Heart right ventricle (tissue), 16 donors: ENCODE measurements at regions of chr10 and their contacts with region 1.

Region 1: DNA sequence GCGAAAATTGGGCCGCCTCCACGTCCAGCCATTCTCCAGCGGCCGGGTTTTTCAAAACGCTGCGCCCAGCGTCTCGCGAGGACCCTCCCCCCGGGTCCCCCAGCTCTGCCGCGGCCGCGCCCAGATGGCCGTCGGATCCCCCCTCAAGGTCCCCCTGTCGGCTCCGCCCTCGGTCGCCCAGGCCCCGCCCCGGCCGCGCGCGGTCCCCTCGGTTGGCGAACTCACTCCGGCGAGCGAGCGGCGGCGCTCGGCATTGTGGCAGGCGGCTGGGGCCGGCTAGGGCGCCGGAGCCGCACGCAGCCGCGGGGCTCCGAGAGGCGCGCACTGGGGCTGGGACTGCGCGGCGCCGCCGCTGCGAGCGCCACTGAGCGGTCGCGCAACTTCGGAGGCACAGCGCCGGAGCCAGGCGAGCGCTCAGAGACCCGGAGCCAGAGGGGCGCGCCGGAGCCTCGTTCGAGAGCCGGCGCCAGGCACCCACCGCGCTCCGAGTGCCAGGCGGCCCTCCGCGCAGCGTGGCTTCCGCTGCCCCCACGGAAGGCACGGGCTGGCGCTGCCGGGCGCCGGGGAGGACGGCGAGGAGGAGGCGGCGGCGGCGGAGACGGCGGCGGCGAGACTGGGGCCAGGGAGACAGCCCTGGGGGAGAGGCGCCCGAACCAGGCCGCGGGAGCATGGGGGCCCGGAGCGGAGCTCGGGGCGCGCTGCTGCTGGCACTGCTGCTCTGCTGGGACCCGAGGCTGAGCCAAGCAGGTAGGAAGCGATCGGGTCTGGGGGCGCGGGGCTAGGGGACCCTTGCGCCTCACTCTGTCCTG is at the start of gene UNC5B:
- DNase-seq: peak; percentile 92
- ATAC-seq: peak; percentile 76 to 93 (median 87)
- H3K4me3 ChIP-seq: peak within 1 kb of the TSS; percentile 62 to 98 (median 82)
- H3K27ac ChIP-seq: peak within 1 kb of the TSS; percentile 61 to 96 (median 93)
- H3K4me1 ChIP-seq: peaks cover 15 to 68% (median 52%) of the 10 kb centered on the region in 9 donors
- H3K27me3 ChIP-seq: peaks cover 0 to 85% (median 10%) of the 10 kb centered on the region in 7 donors
- CTCF ChIP-seq: peak in 6 of 9 donors; percentile 31 to 61 (median 48)
- total RNA-seq, gene UNC5B: 9.0 to 20.6 (median 12.5) TPM

Region 2: DNA sequence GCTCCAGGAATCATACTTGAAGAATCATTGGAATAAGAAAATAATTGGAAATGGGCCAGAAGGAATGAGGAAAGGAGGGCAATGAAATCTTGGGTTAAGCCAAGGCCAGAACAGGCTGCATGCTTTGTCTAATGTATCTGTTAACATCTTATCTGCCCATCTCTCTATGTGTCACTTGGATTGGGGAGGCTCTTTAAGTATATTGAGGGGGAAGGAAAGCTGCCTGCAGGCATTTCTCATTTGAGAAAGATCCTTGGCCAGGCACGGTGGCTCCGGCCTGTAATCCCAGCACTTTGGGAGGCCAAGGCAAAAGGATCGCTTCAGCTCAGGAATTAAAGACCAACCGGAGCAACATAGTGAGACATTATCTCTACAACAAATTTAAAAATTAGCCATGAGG is 338.5 kb before region 1 on chr10:
- intact Hi-C with region 1: no loop called
- DNase-seq: no peak
- ATAC-seq: no peak
- H3K4me3 ChIP-seq: no peak overlapping the region
- H3K27ac ChIP-seq: no peak overlapping the region
- H3K4me1 ChIP-seq: peaks cover 0 to 7% (median 0%) of the 10 kb centered on the region in 9 donors
- H3K27me3 ChIP-seq: no peaks in the 10 kb centered on the region
- CTCF ChIP-seq: no peak

Region 3: GRCh38 chr10:70903262-70903921 is 309.1 kb before region 1 on chr10:
- intact Hi-C with region 1: loop called in 2 of 10 experiments (anchors 5 kb)
- DNase-seq: peak; percentile 59 to 77
- ATAC-seq: peak; percentile 31 to 78 (median 74)
- H3K4me3 ChIP-seq: peak overlapping the region in 1 of 10 donors; percentile 10
- H3K27ac ChIP-seq: no peak overlapping the region
- H3K4me1 ChIP-seq: peaks cover 0 to 24% (median 11%) of the 10 kb centered on the region in 9 donors
- H3K27me3 ChIP-seq: peaks cover 0 to 5% (median 0%) of the 10 kb centered on the region in 7 donors
- CTCF ChIP-seq: peak; percentile 86 to 96 (median 93)

Region 4: GRCh38 chr10:71015674-71016073 is 196.8 kb before region 1 on chr10:
- intact Hi-C with region 1: loop called in 3 of 10 experiments (anchors 5 to 10 kb)
- DNase-seq: no peak
- ATAC-seq: peak in 1 of 8 donors; percentile 36
- H3K4me3 ChIP-seq: no peak overlapping the region
- H3K27ac ChIP-seq: no peak overlapping the region
- H3K4me1 ChIP-seq: peaks cover 0 to 12% (median 7%) of the 10 kb centered on the region in 9 donors
- H3K27me3 ChIP-seq: no peaks in the 10 kb centered on the region
- CTCF ChIP-seq: no peak

Region 5: DNA sequence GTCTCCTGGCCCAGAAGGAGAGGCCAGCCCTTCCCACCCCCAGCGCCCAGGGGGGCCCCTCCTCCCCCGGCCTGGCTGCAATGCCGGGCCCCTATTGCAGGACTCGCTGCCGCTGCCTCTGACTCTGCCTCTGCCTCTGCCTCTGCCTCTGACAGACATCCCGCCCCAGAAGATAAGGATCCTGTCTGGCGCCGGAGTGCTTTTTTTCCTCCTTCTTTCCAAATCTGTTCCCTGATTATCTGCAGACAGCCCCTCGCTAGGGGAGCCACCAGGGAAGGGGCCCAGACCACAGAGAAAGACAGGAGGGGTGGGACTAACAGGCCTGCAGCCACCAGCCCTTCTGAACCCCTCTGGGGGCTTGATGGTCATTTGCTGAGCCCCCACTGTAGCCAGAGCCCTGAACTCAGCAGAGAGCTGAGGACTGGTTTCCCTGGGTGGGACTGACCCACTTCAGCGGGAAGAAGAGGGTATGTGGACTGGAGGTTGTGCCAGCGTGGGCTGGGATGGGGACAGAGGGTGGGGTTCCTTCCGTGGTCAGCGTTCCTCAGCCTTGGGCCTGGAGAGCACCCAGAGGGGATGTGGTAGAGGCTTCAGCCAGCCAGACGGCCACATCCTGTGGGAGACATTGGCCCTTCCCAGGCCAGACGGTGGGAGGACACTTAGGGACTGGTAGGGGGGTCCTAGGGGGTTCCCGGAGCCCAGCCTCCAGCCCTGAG is 22.6 kb after region 1 on chr10:
- intact Hi-C with region 1: loop called in 2 of 10 experiments (anchors 1 to 2 kb)
- DNase-seq: peak; percentile 70 to 74
- ATAC-seq: peak; percentile 53 to 84 (median 74)
- H3K4me3 ChIP-seq: peak overlapping the region in 4 of 10 donors; percentile 12 to 30 (median 20)
- H3K27ac ChIP-seq: peak overlapping the region; percentile 13 to 85 (median 64)
- H3K4me1 ChIP-seq: peaks cover 59 to 100% (median 87%) of the 10 kb centered on the region in 9 donors
- H3K27me3 ChIP-seq: no peaks in the 10 kb centered on the region
- CTCF ChIP-seq: no peak

Region 6: GRCh38 chr10:71252220-71252619 is 39.7 kb after region 1 on chr10:
- intact Hi-C with region 1: no loop called
- DNase-seq: no peak
- ATAC-seq: no peak
- H3K4me3 ChIP-seq: no peak overlapping the region
- H3K27ac ChIP-seq: no peak overlapping the region
- H3K4me1 ChIP-seq: peaks cover 31 to 100% (median 80%) of the 10 kb centered on the region in 9 donors
- H3K27me3 ChIP-seq: no peaks in the 10 kb centered on the region
- CTCF ChIP-seq: no peak

Region 7: DNA sequence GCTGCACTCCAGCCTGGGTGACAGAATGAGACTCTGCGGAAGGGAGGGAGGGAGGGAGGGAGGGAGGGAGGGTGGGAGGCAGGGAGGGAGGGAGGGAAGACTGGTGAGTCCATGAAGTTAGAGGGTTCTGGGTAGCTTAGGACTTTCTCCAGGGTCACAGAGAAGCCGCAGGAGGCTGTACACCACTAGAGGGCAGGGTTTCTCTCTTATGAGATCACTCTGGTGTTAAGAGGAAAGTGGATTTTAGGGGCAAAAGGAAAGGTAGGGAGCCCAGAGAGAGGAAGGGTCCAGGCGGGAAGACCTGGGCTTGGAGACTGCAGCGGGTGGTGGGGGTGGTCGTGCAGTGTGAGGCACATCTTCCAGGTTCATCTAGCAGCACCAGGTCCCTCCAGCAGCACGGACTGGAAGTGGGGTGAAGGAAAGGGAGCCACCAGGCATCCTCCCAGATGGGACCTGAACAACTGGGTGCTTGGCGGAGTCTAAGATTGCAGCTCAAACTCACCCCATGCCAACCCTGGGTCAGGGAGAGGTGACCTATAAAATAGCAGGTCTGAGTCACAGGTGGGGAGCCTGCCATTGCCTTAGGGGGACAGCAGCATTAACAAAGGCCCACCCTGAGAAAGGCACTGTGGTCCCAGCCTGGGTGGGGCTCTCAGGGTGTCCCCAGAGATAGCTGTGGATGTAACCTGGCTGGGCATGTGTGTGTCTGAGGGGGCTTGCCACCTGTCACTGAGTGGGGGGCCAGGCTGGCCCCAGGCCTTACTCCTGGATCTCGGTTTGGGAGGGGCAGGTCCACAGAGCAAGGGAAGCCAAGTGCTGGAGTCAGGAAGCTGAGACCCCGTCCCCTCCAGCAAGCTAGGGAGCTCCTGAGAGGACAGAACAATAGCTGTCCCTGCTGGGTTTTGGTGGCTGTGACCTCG is 58.0 kb after region 1 on chr10:
- intact Hi-C with region 1: loop called in 8 of 10 experiments (anchors 1 to 10 kb)
- DNase-seq: peak; percentile 24 to 60
- ATAC-seq: peak in 7 of 8 donors; percentile 6 to 47 (median 30)
- H3K4me3 ChIP-seq: no peak overlapping the region
- H3K27ac ChIP-seq: peak overlapping the region in 7 of 10 donors; percentile 43 to 87 (median 77)
- H3K4me1 ChIP-seq: peaks cover 30 to 99% (median 67%) of the 10 kb centered on the region in 9 donors
- H3K27me3 ChIP-seq: no peaks in the 10 kb centered on the region
- CTCF ChIP-seq: peak; percentile 36 to 72 (median 62)